ENCODE measurements at regions of chr5 and their contacts with region 1.

Region 1: DNA sequence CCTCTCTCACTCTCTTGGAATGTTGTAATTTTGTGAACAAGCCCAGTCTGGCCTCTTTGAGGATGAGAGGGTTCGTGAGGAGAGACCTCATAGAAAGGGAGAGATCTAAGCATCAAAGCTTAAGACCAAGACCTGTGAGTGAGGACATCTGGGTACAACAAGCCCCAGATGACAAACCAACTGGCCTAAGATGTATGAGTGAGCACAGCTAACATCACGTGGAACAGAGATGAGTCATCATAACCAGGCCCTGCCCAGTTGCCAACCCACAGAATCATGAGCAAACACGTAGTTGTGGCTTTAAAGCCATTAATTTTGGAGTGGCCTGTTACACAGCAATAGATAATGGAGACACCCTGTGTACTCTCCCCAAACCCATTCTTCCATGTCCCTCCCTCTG is 439.1 kb upstream of the KIF2A start:
- DNase-seq: no peak

Region 2: DNA sequence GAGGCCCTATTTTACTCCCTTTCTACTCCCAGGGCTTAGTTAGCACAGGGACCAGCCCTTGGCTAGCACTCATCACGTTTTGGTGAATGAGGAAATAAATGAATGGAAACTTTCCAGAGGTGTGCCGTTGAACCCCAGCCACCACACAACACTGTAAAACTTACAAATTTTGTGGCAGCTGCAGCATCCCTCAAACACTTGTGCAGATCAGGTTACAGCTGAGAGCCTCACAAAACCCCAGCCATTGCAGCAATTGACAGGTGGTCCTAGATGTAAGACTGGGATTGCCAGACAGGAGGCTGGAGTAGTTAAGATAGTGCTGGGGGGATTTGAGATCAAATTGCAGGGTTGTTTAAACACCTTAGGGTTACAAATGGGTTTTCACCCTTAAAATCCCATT is 43.1 kb before region 1 on chr5:
- intact Hi-C with region 1: loop called in 1 of 2 experiments (anchors 1 kb)
- DNase-seq: no peak

Region 3: DNA sequence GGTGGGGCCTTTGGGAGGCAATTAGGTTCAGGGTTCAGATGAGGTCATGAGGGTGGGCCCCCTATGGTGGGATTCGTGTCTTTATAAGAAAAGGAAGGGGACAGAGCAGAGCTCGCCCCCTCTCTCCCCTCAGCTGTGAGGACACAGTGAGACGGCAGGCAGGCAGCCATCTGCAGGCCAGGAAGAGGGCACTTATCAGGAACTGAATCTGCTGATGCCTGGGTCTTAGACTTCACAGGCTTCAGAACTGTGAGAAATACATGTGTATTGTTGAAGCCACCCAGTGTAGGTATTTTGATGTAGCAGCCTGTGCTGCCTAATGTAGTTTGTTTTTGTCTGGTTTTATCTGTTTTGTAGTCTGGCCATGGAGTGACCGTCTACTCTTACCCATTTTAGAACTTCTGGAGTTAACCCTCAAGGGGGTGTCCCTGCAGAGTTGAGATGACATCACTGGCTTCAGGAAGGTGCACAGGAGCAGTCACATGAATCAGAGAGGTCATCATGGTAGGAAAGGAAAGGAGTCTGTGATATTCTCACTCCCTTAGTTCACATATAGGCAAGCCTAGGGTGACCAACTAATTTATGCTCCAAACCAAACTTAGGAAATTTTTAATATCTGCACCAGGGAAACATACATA is 782.7 kb after region 1 on chr5:
- intact Hi-C with region 1: loop called in 1 of 2 experiments (anchors 5 kb)
- DNase-seq: no peak

Measured in posterior vena cava (tissue), 2 donors.